ENCODE measurements at regions of chr22 and their contacts with region 1.

Region 1: GRCh38 chr22:46122511-46122971 is 27.8 kb upstream of the PPARA start:
- DNase-seq: peak; percentile 45 to 83 (median 64)
- ATAC-seq: peak; percentile 78
- H3K4me3 ChIP-seq: no peak overlapping the region
- H3K4me3 Mint-ChIP-seq: no peak overlapping the region
- H3K27ac ChIP-seq: no peak overlapping the region
- H3K27ac Mint-ChIP-seq: no peak overlapping the region
- H3K4me1 ChIP-seq: peaks cover 8% of the 10 kb centered on the region
- H3K4me1 Mint-ChIP-seq: no peaks in the 10 kb centered on the region
- H3K27me3 ChIP-seq: no peaks in the 10 kb centered on the region
- H3K27me3 Mint-ChIP-seq: no peaks in the 10 kb centered on the region
- CTCF ChIP-seq: peak; percentile 92

Region 2: GRCh38 chr22:46296257-46297150 is 174.0 kb after region 1 on chr22 and contains the start of gene GTSE1:
- CTCF ChIA-PET with region 1: interaction called, 11 read pairs
- POLR2A ChIA-PET with region 1: interaction called, 5 read pairs
- intact Hi-C with region 1: loop called (anchors 1 kb)
- DNase-seq: peak; percentile 93 to 99 (median 97)
- ATAC-seq: peak; percentile 98
- H3K4me3 ChIP-seq: peak within 1 kb of the TSS; percentile 77
- H3K4me3 Mint-ChIP-seq: peak within 1 kb of the TSS; percentile 90
- H3K27ac ChIP-seq: peak within 1 kb of the TSS; percentile 75 to 91
- H3K27ac Mint-ChIP-seq: peak within 1 kb of the TSS; percentile 91
- H3K4me1 ChIP-seq: peaks cover 23% of the 10 kb centered on the region
- H3K4me1 Mint-ChIP-seq: peaks cover 26% of the 10 kb centered on the region
- H3K27me3 ChIP-seq: no peaks in the 10 kb centered on the region
- H3K27me3 Mint-ChIP-seq: peaks cover 4% of the 10 kb centered on the region
- CTCF ChIP-seq: peak; percentile 21
- total RNA-seq, gene GTSE1: 0.14 to 0.89 TPM

Region 3: DNA sequence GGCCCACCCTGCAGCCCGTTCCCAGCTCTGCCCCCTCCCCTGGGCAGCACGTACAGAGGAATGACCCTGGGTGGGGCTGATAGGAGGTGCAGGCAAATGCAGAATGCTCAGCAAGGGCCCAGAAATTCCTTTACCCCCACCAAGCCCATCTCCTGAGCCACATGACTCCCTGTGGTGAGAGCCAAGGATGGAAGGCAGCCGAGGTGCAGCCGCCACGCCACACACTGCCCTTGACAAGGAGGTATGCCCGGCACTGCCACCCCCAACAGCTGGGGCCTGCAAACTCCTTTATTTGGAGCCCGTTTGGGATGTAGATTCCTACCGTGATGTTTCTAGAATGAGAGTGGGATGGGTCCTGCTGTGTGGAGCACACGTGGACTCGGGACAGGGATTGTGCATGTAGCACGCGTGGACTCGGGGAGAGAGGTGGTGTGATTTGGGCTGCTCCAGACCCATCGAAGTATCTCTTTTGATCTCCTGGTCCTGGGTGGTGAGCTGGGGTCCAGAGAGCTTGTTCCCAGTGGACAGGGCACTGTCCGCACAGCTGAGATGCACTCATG is 187.1 kb after region 1 on chr22:
- CTCF ChIA-PET with region 1: interaction called, 3 read pairs
- POLR2A ChIA-PET with region 1: no interaction called
- intact Hi-C with region 1: loop called in 1 of 2 experiments (anchors 1 kb)
- DNase-seq: no peak
- ATAC-seq: no peak
- H3K4me3 ChIP-seq: no peak overlapping the region
- H3K4me3 Mint-ChIP-seq: no peak overlapping the region
- H3K27ac ChIP-seq: no peak overlapping the region
- H3K27ac Mint-ChIP-seq: no peak overlapping the region
- H3K4me1 ChIP-seq: no peaks in the 10 kb centered on the region
- H3K4me1 Mint-ChIP-seq: no peaks in the 10 kb centered on the region
- H3K27me3 ChIP-seq: no peaks in the 10 kb centered on the region
- H3K27me3 Mint-ChIP-seq: no peaks in the 10 kb centered on the region
- CTCF ChIP-seq: no peak

Measured in CD4-positive, alpha-beta T cell (primary cell).